AG04449 (cell line): ENCODE measurements at regions of chr3 and their contacts with region 1.

Region 1: GRCh38 chr3:36957862-36958686 is 13.2 kb upstream of the TRANK1 start:
- DNase-seq: peak; percentile 45
- H3K4me3 ChIP-seq: no peak overlapping the region
- CTCF ChIP-seq: no peak

Region 2: DNA sequence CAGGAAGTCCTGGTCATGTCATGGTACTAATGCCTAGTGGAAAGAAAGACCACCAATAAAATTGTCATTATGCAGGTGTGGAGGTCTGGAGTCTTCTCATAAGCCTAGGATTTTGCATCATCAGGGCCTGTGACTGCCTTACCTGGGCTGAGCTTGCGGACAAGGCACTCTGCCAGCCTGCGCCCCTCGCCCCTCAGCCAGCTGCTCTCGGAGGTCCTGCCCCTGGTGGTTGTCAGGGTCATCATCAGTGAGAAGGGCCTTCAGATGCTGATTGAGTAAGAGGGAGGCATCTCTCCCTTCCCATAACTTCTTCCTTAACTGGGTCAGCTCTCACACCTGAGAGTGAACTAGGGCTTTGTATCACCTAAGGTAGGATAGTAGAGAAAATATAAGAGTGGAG is 326.5 kb before region 1 on chr3:
- CTCF ChIA-PET with region 1: no interaction called
- POLR2A ChIA-PET with region 1: no interaction called
- DNase-seq: no peak
- H3K4me3 ChIP-seq: no peak overlapping the region
- CTCF ChIP-seq: no peak

Region 3: GRCh38 chr3:36792342-36792741 is 165.7 kb before region 1 on chr3:
- CTCF ChIA-PET with region 1: interaction called, 24 read pairs
- POLR2A ChIA-PET with region 1: no interaction called
- DNase-seq: no peak
- H3K4me3 ChIP-seq: no peak overlapping the region
- CTCF ChIP-seq: peak; percentile 57

Region 4: GRCh38 chr3:36907911-36908646 is 50.0 kb before region 1 on chr3:
- CTCF ChIA-PET with region 1: interaction called, 41 read pairs
- POLR2A ChIA-PET with region 1: no interaction called
- DNase-seq: no peak
- H3K4me3 ChIP-seq: peak overlapping the region; percentile 23
- CTCF ChIP-seq: no peak

Region 5: GRCh38 chr3:36933540-36934296 is 24.4 kb before region 1 on chr3:
- CTCF ChIA-PET with region 1: interaction called, 10 read pairs
- POLR2A ChIA-PET with region 1: no interaction called
- DNase-seq: no peak
- H3K4me3 ChIP-seq: no peak overlapping the region
- CTCF ChIP-seq: no peak

Region 6: DNA sequence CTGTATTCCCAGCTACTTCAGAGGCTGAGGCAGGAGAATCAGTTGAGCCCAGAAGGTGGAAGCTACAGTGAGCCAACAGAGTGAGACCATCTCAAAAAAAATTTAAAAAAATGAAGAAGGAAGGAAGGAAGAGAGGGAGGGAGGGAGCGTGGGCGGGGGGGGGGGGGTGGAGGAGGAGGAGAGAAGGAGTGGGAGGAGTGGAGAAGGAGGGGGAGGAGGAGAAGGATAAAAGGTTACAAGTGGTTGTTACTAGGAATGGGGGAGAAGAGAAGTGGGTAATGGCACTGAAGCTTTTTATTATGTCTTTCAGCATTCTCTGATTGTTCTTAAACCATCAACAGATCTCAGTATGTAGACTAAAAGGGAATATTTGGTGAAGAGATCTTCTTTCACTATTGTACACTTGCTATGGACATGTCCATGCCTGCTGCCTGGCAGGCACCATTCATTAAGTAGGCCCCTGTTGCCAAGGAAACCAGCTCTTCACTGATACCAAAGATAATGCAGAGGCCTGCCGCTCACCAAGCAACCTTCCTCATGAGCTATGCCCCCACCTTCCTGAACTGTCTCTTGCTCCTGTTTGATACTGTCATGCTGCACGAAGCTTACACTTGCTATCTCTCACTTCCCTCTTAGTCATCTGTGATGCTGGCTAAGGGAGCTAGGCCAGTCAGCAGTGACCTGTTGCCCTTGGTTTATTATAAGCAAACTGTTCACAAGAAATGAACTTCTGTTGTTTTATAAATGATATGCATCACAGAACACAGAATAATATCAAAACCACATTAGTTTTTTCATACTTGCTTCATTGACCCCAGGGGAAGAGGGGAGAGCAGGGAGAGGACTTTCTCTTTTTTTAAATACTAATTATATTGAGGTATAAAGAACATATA is 11.7 kb after region 1 on chr3:
- CTCF ChIA-PET with region 1: interaction called, 45 read pairs
- POLR2A ChIA-PET with region 1: no interaction called
- DNase-seq: no peak
- H3K4me3 ChIP-seq: no peak overlapping the region
- CTCF ChIP-seq: no peak

Region 7: GRCh38 chr3:36993326-36994283 is 35.5 kb after region 1 on chr3 and contains the start of gene MLH1:
- CTCF ChIA-PET with region 1: interaction called, 20 read pairs
- POLR2A ChIA-PET with region 1: no interaction called
- DNase-seq: peak; percentile 100
- H3K4me3 ChIP-seq: peak within 1 kb of the TSS; percentile 86
- CTCF ChIP-seq: no peak